ENCODE measurements at regions of chr16 and their contacts with region 1.

Region 1: GRCh38 chr16:75234856-75235696 is 16.3 kb downstream of the CTRB1 start:
- DNase-seq: peak; percentile 11
- ATAC-seq: no peak
- H3K4me3 Mint-ChIP-seq: no peak overlapping the region
- H3K27ac Mint-ChIP-seq: no peak overlapping the region
- H3K4me1 Mint-ChIP-seq: peaks cover 7% of the 10 kb centered on the region
- H3K27me3 Mint-ChIP-seq: no peaks in the 10 kb centered on the region
- CTCF ChIP-seq: no peak

Region 2: GRCh38 chr16:75029557-75030253 is 205.4 kb before region 1 on chr16:
- CTCF ChIA-PET with region 1: no interaction called
- POLR2A ChIA-PET with region 1: no interaction called
- DNase-seq: no peak
- ATAC-seq: no peak
- H3K4me3 Mint-ChIP-seq: no peak overlapping the region
- H3K27ac Mint-ChIP-seq: no peak overlapping the region
- H3K4me1 Mint-ChIP-seq: 0 out of 2 replicates have a peak, but pooled peaks cover 5% of the 10 kb centered on the region
- H3K27me3 Mint-ChIP-seq: no peaks in the 10 kb centered on the region
- CTCF ChIP-seq: no peak

Region 3: GRCh38 chr16:75198135-75198600 is 36.9 kb before region 1 on chr16:
- CTCF ChIA-PET with region 1: interaction called, 22 read pairs
- POLR2A ChIA-PET with region 1: interaction called, 5 read pairs
- DNase-seq: no peak
- ATAC-seq: no peak; the same call in 1 of the 2 replicates
- H3K4me3 Mint-ChIP-seq: no peak overlapping the region
- H3K27ac Mint-ChIP-seq: no peak overlapping the region
- H3K4me1 Mint-ChIP-seq: peaks cover 9% of the 10 kb centered on the region
- H3K27me3 Mint-ChIP-seq: no peaks in the 10 kb centered on the region; the same call in 1 of the 2 replicates
- CTCF ChIP-seq: no peak

Region 4: DNA sequence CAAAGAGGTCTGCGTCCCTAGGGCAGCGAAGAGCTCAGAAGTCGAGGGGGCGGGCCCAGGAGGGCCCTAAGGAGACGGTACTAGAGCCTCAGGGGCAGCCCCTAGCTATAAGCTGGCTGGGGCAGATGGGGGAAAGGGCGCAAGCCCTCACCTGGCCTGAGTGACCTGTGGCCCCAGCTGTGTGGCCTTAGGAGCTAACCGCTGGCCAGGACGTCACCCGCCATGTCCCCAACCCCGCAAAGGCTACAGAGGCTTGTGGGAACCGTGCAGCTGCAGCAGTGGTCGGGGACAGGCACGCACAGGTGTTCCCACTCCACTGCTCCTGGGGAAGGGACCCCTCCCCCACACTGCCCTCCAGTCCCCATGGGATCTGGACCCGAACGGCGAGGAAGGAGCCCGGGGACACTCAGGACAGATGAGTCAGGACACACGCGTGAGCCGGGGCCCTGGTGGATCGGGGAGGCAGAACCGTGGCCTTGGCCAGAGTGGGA is 26.1 kb before region 1 on chr16:
- CTCF ChIA-PET with region 1: interaction called, 22 read pairs
- POLR2A ChIA-PET with region 1: no interaction called
- DNase-seq: no peak
- ATAC-seq: peak; percentile 22
- H3K4me3 Mint-ChIP-seq: no peak overlapping the region
- H3K27ac Mint-ChIP-seq: no peak overlapping the region
- H3K4me1 Mint-ChIP-seq: no peaks in the 10 kb centered on the region
- H3K27me3 Mint-ChIP-seq: no peaks in the 10 kb centered on the region
- CTCF ChIP-seq: no peak

Region 5: GRCh38 chr16:75224306-75225091 is 10.6 kb before region 1 on chr16:
- CTCF ChIA-PET with region 1: interaction called, 12 read pairs
- POLR2A ChIA-PET with region 1: no interaction called
- DNase-seq: no peak
- ATAC-seq: no peak
- H3K4me3 Mint-ChIP-seq: no peak overlapping the region
- H3K27ac Mint-ChIP-seq: no peak overlapping the region; the same call in 1 of the 2 replicates
- H3K4me1 Mint-ChIP-seq: peaks cover 3% of the 10 kb centered on the region; the same call in 1 of the 2 replicates
- H3K27me3 Mint-ChIP-seq: no peaks in the 10 kb centered on the region
- CTCF ChIP-seq: no peak

Region 6: DNA sequence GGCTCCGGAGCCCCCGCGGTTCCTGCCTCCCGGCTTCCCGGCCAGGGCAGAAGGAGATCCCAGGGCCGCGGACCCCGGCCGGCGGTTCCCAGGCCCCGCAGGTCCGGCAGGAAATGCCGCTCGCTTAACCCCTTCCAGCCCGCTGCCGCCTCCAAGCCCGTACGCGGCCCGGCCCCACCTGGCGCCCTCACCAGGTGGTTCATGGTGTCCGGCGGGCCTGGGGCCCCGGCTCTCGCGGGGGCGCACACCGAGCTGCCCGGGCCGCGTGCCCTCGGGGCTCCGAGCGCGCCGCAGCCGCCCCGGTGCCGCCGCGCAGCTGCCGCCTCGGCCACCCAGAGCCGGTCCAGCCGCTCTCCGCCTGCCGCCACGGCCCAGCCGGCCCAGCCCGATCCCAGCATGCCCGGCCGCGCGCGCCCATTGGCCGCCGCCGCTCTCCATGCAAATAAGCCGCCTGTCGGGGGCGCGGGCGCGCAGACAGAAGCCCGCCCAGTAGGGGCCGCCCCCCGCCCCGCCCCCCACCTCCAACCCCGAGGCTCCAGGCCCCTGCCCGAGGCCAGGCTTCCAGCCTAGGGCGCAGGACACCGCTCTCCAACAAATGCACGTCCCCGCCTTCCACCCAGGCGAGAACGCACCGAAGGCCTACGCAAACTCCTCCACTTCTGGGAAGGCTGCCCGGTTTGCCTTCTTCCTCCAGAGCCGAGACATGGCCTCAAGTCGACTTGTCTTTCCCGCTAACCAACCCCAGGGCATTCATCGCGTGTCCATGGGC is 16.4 kb after region 1 on chr16 and contains the start of gene BCAR1:
- CTCF ChIA-PET with region 1: interaction called, 92 read pairs
- POLR2A ChIA-PET with region 1: interaction called, 22 read pairs
- DNase-seq: peak; percentile 93
- ATAC-seq: peak; percentile 63
- H3K4me3 Mint-ChIP-seq: peak within 1 kb of the TSS; percentile 79
- H3K27ac Mint-ChIP-seq: peak within 1 kb of the TSS; percentile 97
- H3K4me1 Mint-ChIP-seq: peaks cover 83% of the 10 kb centered on the region
- H3K27me3 Mint-ChIP-seq: no peaks in the 10 kb centered on the region
- CTCF ChIP-seq: no peak
- total RNA-seq, gene BCAR1: 87.3 to 95.6 TPM (median 88.6 TPM) in 3 replicates

Region 7: DNA sequence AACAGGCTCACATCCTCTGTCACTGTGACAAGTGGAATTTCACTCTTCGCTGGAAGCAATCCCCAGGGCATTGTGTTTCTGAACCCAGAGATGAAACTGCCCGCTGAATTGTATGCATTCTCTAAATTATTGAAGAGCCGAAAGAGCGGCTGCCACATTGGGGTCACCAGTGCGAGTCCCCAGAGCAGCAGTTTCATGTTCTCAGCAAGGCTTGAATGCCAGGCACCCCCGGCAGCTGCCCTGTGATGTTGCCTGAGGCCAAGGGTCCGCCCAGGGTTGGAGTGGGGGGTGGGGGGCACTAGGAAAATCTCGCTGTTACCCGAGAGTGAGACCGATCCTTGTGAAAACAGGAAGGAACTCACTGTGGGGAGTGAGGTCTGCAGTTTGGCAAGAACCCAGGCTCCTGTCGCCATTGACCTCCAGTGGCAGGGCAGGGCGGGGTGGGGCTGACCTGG is 37.0 kb after region 1 on chr16:
- CTCF ChIA-PET with region 1: interaction called, 12 read pairs
- POLR2A ChIA-PET with region 1: no interaction called
- DNase-seq: no peak
- ATAC-seq: no peak
- H3K4me3 Mint-ChIP-seq: no peak overlapping the region
- H3K27ac Mint-ChIP-seq: no peak overlapping the region
- H3K4me1 Mint-ChIP-seq: peaks cover 3% of the 10 kb centered on the region; the same call in 1 of the 2 replicates
- H3K27me3 Mint-ChIP-seq: no peaks in the 10 kb centered on the region
- CTCF ChIP-seq: no peak

Region 8: GRCh38 chr16:75385507-75386152 is 150.6 kb after region 1 on chr16:
- CTCF ChIA-PET with region 1: interaction called, 43 read pairs
- POLR2A ChIA-PET with region 1: no interaction called
- DNase-seq: no peak
- ATAC-seq: peak; percentile 28; the same call in 1 of the 2 replicates
- H3K4me3 Mint-ChIP-seq: no peak overlapping the region
- H3K27ac Mint-ChIP-seq: peak overlapping the region; percentile 5; the same call in 1 of the 2 replicates
- H3K4me1 Mint-ChIP-seq: no peaks in the 10 kb centered on the region
- H3K27me3 Mint-ChIP-seq: no peaks in the 10 kb centered on the region
- CTCF ChIP-seq: peak; percentile 52